ENCODE measurements at regions of chr5 and their contacts with region 1.

Region 1: GRCh38 chr5:80453366-80453765 is 34.5 kb upstream of the FAM151B start:
- DNase-seq: no peak
- ATAC-seq: no peak
- H3K4me3 Mint-ChIP-seq: no peak overlapping the region
- H3K27ac Mint-ChIP-seq: no peak overlapping the region
- H3K4me1 Mint-ChIP-seq: no peaks in the 10 kb centered on the region
- H3K27me3 Mint-ChIP-seq: no peaks in the 10 kb centered on the region

Region 2: GRCh38 chr5:79284846-79285245 is 1168.5 kb before region 1 on chr5:
- CTCF ChIA-PET with region 1: no interaction called
- POLR2A ChIA-PET with region 1: no interaction called
- intact Hi-C with region 1: no loop called
- DNase-seq: no peak
- ATAC-seq: no peak
- H3K4me3 Mint-ChIP-seq: no peak overlapping the region
- H3K27ac Mint-ChIP-seq: no peak overlapping the region
- H3K4me1 Mint-ChIP-seq: peaks cover 16% of the 10 kb centered on the region
- H3K27me3 Mint-ChIP-seq: no peaks in the 10 kb centered on the region

Region 3: GRCh38 chr5:80495891-80496290 is 42.5 kb after region 1 on chr5:
- CTCF ChIA-PET with region 1: no interaction called
- POLR2A ChIA-PET with region 1: no interaction called
- intact Hi-C with region 1: loop called in 1 of 2 experiments (anchors 1 kb)
- DNase-seq: no peak
- ATAC-seq: no peak
- H3K4me3 Mint-ChIP-seq: no peak overlapping the region
- H3K27ac Mint-ChIP-seq: no peak overlapping the region
- H3K4me1 Mint-ChIP-seq: no peaks in the 10 kb centered on the region
- H3K27me3 Mint-ChIP-seq: no peaks in the 10 kb centered on the region

Region 4: GRCh38 chr5:80620211-80620610 is 166.8 kb after region 1 on chr5:
- CTCF ChIA-PET with region 1: no interaction called
- POLR2A ChIA-PET with region 1: no interaction called
- intact Hi-C with region 1: no loop called
- DNase-seq: no peak
- ATAC-seq: no peak
- H3K4me3 Mint-ChIP-seq: no peak overlapping the region
- H3K27ac Mint-ChIP-seq: no peak overlapping the region
- H3K4me1 Mint-ChIP-seq: no peaks in the 10 kb centered on the region
- H3K27me3 Mint-ChIP-seq: no peaks in the 10 kb centered on the region

Measured in activated CD4-positive, alpha-beta T cell treated with anti-CD3 and anti-CD28 coated beads for 36 hours (primary cell).